ENCODE measurements at regions of chr9 and their contacts with region 1.

Region 1: DNA sequence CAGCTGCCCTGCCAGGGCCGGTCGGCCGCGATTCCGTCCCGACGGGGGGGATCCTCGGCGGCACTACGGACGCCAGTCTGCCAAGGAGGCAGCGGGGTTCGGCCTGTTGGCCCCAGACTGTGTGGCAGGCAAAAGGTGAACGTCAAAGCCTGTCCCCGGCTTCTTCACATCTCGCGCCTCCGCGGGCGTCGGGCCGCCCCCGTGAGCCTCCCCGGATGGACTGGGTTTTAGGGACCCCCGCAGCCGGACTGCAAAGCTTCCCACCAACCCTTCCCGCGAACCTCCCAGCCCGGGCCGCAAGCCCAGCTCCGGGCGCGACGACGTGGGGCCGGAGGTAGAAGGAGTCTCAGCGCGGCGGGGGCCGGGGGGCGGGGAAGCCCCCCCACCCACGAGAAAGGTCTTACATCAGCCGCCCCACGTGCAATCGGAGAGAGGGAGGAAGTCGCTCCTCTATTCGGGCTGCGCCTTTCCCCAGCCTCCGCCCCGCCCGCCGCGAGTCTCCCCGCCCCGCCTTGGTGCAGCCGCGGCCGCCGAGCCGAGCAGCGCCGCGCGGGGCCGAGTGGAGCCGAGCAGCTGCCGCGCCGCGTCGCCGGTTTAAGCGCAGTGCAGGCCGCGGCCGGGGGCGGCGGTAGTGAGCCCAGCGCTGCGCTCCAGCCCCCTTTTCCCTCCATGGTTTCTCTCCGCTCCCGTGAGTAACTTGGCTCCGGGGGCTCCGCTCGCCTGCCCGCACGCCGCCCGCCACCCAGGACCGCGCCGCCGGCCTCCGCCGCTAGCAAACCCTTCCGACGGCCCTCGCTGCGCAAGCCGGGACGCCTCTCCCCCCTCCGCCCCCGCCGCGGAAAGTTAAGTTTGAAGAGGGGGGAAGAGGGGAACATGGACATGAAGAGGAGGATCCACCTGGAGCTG is at the start of gene ANP32B:
- DNase-seq: peak; percentile 94 to 97
- ATAC-seq: peak; percentile 96
- H3K4me3 ChIP-seq: peak within 1 kb of the TSS; percentile 98
- H3K27ac ChIP-seq: peak within 1 kb of the TSS; percentile 84 to 90
- H3K4me1 ChIP-seq: peaks cover 0 to 2% of the 10 kb centered on the region in 2 donors
- H3K27me3 ChIP-seq: no peaks in the 10 kb centered on the region
- total RNA-seq, gene ANP32B: 98.6 to 111 TPM

Region 2: GRCh38 chr9:97830884-97831829 is 151.8 kb before region 1 on chr9:
- intact Hi-C with region 1: no loop called
- DNase-seq: no peak
- ATAC-seq: no peak
- H3K4me3 ChIP-seq: no peak overlapping the region
- H3K27ac ChIP-seq: no peak overlapping the region
- H3K4me1 ChIP-seq: no peaks in the 10 kb centered on the region
- H3K27me3 ChIP-seq: no peaks in the 10 kb centered on the region

Region 3: DNA sequence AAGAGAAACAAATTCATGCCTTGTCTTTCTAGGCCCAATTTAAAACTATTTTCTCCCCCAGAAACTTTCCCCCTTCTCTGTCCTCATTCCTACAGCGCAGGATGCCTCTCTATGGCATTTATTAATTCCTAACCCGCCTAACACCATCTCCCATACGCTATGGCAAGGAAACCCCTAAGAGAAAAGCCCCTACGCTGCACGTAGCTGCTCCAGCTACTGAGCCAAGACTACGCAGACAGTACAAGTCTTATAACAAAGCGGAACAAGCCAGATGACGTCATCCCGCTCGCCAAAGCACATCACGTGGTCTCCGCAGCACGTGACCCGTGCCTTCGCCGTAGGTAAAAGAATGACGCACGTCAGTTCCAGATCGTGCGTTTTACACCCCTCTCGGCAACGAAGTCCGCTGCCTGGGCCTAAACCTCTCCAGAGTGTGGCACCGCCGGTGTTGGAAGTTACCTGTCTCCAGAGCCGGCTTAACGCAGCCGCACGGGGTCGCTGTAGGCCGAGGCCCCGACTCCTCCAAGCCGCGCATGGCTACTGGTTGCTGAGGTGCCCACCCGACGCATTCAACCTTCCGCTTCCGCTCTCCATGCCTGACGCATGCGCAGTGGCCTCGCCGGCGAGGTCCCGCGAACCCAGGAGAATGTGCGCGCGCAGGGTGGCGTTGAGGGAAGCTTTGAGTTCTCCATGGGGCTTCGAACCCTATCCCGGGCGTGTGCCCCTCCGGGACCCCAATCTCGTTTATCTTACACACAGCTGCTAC is 60.8 kb before region 1 on chr9 and contains the start of gene TRMO:
- intact Hi-C with region 1: loop called (anchors 2 to 10 kb)
- DNase-seq: peak; percentile 99 to 100
- ATAC-seq: peak; percentile 97
- H3K4me3 ChIP-seq: peak within 1 kb of the TSS; percentile 44 to 88
- H3K27ac ChIP-seq: peak within 1 kb of the TSS; percentile 77 to 91
- H3K4me1 ChIP-seq: no peaks in the 10 kb centered on the region
- H3K27me3 ChIP-seq: no peaks in the 10 kb centered on the region
- total RNA-seq, gene TRMO: 9.6 to 10.7 TPM

Region 4: GRCh38 chr9:98022447-98022846 is 39.5 kb after region 1 on chr9:
- intact Hi-C with region 1: loop called in 1 of 2 experiments (anchors 5 kb)
- DNase-seq: peak in 1 of 2 donors; percentile 76
- ATAC-seq: peak; percentile 65
- H3K4me3 ChIP-seq: no peak overlapping the region
- H3K27ac ChIP-seq: no peak overlapping the region
- H3K4me1 ChIP-seq: no peaks in the 10 kb centered on the region
- H3K27me3 ChIP-seq: no peaks in the 10 kb centered on the region

Region 5: DNA sequence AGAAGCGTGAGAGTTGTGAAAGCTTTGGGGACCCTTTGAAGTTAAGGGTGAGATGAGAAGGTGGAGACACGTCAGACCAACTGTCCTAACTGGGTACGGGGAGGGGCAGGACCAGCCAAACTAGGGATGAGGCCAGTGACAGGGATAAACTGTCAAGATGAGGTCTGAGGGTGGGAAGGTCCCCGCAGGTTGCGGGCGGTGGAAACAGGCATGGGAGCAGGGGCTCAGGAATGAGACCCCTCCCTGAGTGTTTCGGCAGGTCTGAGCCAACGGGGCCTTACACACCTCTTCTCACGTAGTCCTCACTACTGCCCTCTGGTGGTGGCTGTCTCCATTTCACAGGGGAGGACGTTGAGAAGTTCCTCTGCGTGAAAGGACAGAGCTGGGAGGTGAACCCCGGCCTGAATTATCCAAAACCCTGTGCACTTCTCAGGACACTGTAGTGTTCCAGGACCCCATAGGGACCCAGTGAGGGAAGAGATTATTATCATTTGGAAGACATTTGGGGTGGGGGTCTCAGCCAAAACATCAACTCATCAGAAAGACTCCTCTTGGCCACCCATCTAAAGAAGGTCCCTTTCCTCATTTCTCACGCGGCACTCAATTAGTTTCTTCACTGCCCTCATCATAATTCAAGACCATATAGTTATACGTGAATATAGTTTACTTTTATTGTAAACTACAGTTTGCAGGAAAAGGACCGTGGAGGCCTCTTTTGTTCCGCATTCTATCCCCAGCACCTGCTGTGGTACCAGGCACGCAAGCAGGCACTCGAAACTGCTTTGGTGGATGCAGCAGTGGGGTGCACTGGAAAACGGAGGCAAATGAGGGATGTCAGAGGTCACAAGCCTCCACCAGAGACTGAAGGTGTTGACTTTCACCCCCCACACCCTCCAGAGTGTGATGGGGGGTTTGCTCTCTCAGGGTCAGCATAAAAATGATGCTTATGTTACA is 51.9 kb after region 1 on chr9:
- intact Hi-C with region 1: loop called in 1 of 2 experiments (anchors 5 kb)
- DNase-seq: peak; percentile 89 to 92
- ATAC-seq: peak; percentile 89
- H3K4me3 ChIP-seq: no peak overlapping the region
- H3K27ac ChIP-seq: peak overlapping the region in 1 of 2 donors; percentile 53
- H3K4me1 ChIP-seq: no peaks in the 10 kb centered on the region
- H3K27me3 ChIP-seq: no peaks in the 10 kb centered on the region

Region 6: GRCh38 chr9:98056269-98057137 is 73.6 kb after region 1 on chr9 and contains the start of gene NANS:
- intact Hi-C with region 1: loop called in 1 of 2 experiments (anchors 2 kb)
- DNase-seq: peak; percentile 96 to 98
- ATAC-seq: peak; percentile 98
- H3K4me3 ChIP-seq: peak within 1 kb of the TSS; percentile 56 to 71
- H3K27ac ChIP-seq: peak within 1 kb of the TSS; percentile 89 to 94
- H3K4me1 ChIP-seq: no peaks in the 10 kb centered on the region
- H3K27me3 ChIP-seq: no peaks in the 10 kb centered on the region
- total RNA-seq, gene NANS: 40.8 to 47.3 TPM

Region 7: DNA sequence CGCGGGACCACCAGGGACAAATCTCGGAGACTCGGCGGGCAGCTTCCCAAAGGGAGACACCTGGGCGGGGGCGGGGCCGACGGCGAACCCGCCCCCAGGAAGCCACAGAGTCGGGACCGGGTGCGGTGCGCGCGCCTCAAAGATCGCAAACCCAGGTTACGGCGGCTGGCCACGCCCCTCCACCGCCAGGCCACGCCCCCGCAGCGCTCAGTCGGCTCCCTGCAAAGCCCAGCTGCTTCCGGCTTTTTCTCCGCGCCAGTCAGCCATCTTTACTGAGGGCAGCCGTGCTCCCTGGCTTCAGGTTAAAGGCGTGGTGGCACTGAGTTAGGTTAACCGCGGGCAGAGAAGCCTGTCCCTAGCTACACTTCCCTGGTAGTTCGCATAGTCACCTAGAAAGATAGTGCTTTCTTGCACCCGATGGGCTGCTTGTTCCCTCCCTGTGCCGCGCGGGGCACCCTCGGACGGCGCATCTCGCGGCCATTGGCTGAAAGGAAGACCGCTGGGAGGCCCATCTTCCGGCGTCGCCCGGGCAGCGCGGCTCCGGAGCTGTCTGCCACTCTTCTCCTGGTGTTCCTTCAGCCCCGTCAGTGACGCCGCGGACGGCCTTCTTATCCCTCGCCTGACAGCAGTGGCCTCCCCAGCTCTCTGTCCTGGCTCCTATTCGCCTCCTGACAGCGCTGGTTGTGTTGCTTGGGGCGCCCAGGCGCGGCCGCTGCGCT is 272.8 kb after region 1 on chr9 and contains the start of gene TBC1D2:
- intact Hi-C with region 1: loop called in 1 of 2 experiments (anchors 5 kb)
- DNase-seq: peak; percentile 97 to 98
- ATAC-seq: peak; percentile 99
- H3K4me3 ChIP-seq: peak within 1 kb of the TSS; percentile 77 to 92
- H3K27ac ChIP-seq: peak within 1 kb of the TSS; percentile 23 to 94
- H3K4me1 ChIP-seq: no peaks in the 10 kb centered on the region
- H3K27me3 ChIP-seq: no peaks in the 10 kb centered on the region
- total RNA-seq, gene TBC1D2: 9.7 to 12.4 TPM